ENCODE measurements at regions of chr7 and their contacts with region 1.

Region 1: DNA sequence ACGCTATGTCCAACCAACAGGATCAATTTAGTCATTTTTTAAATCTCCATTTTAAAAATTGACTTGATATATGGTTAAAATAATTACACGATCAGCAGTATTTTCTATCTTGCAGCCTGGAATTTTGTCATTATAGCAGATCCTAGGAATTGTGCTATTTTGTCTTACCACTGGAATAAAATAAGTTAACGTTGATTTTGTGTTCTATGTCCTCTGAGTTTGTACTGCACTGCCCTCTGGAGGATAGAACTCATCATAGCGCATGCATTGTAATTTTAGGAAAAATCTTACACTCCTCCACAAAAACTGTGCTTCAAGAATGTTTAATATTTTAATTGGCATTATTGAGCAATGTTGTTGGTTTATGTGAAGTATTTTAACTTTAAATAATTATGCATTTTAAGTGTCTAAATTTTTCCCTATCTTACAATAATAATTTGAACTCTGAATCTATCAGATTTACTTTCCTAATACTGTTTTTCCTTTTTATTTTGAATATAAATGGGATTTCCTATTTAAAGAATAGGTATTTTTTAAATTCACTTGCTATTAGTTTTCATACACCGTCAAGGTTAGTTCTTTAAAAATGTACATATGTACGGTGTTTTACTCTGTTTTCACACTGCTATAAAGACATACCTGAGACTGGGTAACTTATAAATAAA is 220.1 kb downstream of the PPP1R3A start:
- DNase-seq: no peak
- ATAC-seq: no peak

Region 2: GRCh38 chr7:113404245-113404644 is 294.4 kb before region 1 on chr7:
- intact Hi-C with region 1: loop called (anchors 5 to 10 kb)
- DNase-seq: no peak
- ATAC-seq: no peak